CD4-positive, alpha-beta memory T cell (primary cell): ENCODE measurements at regions of chr3 and their contacts with region 1.

Region 1: DNA sequence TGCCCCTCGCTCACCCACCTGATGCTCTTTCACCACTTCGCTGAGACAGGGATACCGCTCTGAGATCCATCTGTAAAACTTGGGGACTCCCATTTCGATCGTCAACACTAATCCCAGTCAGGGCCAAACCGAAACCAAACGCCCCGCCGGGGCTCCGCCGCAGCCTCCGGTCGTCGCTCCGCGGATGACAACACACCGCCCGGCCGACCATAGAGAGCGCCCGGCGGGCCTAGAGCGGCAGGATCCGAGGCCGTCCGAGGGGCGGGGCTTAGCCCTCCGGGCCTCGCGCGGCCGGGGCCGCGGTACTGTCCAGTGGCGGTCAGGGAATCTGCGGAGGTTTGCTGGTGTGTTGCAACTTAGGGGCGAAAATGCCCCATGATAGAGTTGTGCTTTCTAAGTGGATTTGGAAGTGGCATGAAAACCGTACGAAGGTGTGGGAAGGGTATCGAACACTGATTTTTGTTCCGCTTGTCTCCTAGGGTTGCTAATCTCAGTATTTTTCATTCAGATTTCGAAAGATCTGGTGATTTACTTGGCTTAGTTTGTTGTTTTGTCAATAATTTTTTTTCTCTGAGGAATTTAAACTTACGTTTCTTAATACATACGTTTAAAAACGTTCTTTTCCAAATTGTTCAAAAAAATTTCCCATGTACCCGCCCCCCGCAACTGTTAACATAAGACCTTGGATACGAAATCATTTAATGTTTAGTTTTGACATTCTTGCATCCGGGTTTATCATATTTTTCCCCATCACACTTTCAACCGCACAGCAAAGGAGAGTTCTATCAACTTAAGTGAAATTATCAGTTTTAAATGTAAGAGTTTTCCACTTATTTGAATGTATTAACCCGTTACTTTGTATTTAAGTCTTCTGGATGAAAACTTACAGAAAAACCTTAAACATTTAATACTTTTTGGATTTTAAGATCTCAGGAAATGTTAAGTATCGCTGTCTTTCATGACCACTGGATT is at the start of gene XRN1:
- DNase-seq: peak; percentile 94 to 98 (median 95)
- H3K4me3 ChIP-seq: peak within 1 kb of the TSS; percentile 96 to 99
- H3K4me3 Mint-ChIP-seq: peak within 1 kb of the TSS; percentile 98 to 100 (median 99)
- H3K27ac ChIP-seq: peak within 1 kb of the TSS; percentile 100
- H3K27ac Mint-ChIP-seq: peak within 1 kb of the TSS; percentile 99 to 100 (median 100)
- H3K4me1 ChIP-seq: peaks cover 44% of the 10 kb centered on the region
- H3K4me1 Mint-ChIP-seq: peaks cover 27 to 54% (median 41%) of the 10 kb centered on the region in 4 donors
- H3K27me3 ChIP-seq: no peaks in the 10 kb centered on the region
- H3K27me3 Mint-ChIP-seq: no peaks in the 10 kb centered on the region
- total RNA-seq, gene XRN1: 102 to 104 TPM

Region 2: DNA sequence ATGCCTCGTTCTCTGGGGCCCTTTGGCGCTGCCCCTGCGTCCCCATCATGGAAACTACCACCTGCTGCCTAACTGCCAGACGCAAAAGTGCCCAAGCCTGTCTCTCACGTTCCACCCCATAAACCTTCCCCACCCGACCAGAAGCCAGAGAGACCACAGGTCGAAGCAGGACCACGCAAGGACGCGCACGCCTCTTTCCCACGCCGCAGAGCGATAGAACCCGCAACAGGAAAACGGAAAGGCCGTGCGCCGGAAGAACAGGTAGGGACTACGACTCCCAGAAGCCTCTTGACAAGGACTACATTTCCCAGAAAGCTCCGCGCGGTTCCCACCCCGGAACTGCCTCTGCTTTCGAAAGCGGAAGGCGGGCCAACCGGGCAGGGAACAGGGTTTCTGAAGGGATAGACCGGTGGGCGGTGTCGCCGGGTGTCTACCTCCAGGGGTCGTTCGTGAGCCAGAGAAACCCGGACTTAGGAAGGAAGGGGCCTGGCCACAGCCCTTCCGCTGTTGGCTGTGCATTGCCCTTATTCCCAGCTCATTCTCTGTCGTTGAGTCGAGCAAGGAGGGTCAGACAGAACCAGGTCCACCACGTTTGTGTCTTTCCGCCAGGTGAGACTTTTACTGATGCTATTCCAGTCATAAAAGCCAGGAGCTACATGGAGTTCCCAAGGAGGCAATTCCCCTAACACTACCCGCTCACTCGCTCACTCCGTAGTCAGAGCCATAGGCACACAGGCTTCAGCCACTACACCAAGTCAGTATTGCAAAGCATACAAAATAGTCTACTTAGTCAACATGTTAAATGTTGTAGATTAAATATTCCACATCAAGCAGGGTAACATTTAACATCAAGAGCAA is 1136.4 kb before region 1 on chr3:
- CTCF ChIA-PET with region 1: no interaction called
- POLR2A ChIA-PET with region 1: no interaction called
- intact Hi-C with region 1: loop called (anchors 5 kb)
- DNase-seq: peak; percentile 97 to 99 (median 98)
- H3K4me3 ChIP-seq: peak overlapping the region; percentile 68 to 73
- H3K4me3 Mint-ChIP-seq: peak overlapping the region; percentile 92 to 100 (median 98)
- H3K27ac ChIP-seq: peak overlapping the region; percentile 66
- H3K27ac Mint-ChIP-seq: peak overlapping the region; percentile 89 to 99 (median 97)
- H3K4me1 ChIP-seq: peaks cover 46% of the 10 kb centered on the region
- H3K4me1 Mint-ChIP-seq: peaks cover 32 to 60% (median 49%) of the 10 kb centered on the region in 4 donors
- H3K27me3 ChIP-seq: no peaks in the 10 kb centered on the region
- H3K27me3 Mint-ChIP-seq: no peaks in the 10 kb centered on the region

Region 3: DNA sequence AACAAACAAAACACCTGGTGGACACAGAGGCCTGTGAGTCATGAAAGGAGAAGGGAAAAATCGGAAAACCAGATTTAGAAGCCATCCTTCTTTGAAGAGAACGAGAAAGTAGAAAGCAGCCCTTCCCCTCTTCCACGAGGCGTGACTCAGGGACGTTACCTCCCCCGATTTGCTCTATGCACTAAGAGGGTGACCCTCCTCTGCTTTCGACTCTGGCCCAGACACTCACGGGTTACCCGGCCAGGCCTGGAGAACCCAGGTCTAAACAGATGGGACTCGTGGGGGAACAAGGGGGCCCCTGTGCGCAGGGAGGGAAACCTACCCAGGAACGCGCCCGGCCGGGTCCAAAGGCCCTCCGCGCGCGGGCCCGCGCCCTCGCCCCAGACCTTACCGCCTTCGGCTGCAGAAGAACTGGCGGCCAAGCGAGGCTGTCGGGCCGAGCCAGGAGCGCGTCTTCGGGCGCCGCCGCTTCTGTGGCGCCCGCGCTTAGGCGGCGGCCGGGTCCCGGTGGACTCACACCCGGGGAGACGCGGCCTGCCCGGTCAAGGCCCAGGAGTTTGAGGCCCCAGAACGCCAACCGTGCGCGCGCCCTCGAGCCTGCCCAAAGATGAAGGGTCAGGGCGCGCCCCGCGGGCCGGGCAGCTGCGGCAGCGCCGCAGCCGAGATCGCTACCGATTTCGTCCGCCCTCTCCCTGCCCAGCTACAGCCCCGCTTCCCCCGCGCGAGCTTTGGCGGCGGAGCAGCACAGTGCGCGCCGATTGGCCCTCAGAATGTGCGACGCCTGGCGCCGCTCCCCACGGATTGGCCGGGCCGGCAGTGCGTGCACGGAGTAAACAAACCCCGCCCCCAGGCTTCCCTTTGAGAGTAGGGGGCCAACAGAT is 299.1 kb before region 1 on chr3 and contains the start of gene TFDP2:
- CTCF ChIA-PET with region 1: no interaction called
- POLR2A ChIA-PET with region 1: no interaction called
- intact Hi-C with region 1: loop called (anchors 5 kb)
- DNase-seq: peak; percentile 81 to 84 (median 84)
- H3K4me3 ChIP-seq: peak within 1 kb of the TSS; percentile 4 to 67
- H3K4me3 Mint-ChIP-seq: peak within 1 kb of the TSS; percentile 88 to 96 (median 90)
- H3K27ac ChIP-seq: peak within 1 kb of the TSS; percentile 66
- H3K27ac Mint-ChIP-seq: peak within 1 kb of the TSS; percentile 58 to 95 (median 92)
- H3K4me1 ChIP-seq: peaks cover 20% of the 10 kb centered on the region
- H3K4me1 Mint-ChIP-seq: peaks cover 23 to 35% (median 27%) of the 10 kb centered on the region in 4 donors
- H3K27me3 ChIP-seq: no peaks in the 10 kb centered on the region
- H3K27me3 Mint-ChIP-seq: no peaks in the 10 kb centered on the region
- total RNA-seq, gene TFDP2: 29.0 to 31.5 TPM

Region 4: DNA sequence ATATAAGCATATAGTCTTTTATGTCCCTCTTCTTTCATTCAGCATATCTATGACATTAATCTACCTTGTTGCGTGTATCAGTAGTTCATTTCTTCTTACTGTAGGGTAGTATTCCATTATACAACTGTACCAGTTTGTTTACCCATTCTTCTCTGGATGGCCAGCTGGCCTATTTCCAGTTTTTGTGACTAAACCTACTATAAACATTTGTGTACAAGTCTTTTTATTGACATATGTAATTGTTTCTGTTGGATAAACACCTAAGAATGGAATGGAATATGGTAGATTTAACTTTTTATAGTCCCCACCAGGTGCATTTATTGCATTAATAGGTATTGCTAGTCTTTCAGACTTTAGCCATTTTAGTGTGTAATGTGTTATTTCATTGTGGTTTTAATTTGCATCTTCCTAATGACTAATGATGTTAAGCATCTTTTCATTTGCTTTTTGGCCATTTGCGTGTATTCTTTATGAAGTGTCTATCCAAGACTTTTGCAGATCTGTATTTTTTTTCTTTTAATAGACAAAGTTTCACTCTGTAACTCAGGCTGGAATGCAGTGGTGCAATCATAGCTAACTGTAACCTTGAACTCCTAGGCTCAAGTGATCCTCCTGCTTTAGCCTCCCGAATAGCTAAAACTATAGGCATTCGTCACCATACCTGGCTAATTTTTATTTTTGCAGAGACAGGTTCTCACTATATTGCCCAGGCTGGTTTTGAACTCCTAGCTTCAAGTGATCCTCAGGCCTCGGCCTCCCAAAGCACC is 41.6 kb after region 1 on chr3:
- CTCF ChIA-PET with region 1: no interaction called
- POLR2A ChIA-PET with region 1: no interaction called
- intact Hi-C with region 1: no loop called
- DNase-seq: no peak
- H3K4me3 ChIP-seq: no peak overlapping the region
- H3K4me3 Mint-ChIP-seq: no peak overlapping the region
- H3K27ac ChIP-seq: no peak overlapping the region
- H3K27ac Mint-ChIP-seq: no peak overlapping the region
- H3K4me1 ChIP-seq: no peaks in the 10 kb centered on the region
- H3K4me1 Mint-ChIP-seq: no peaks in the 10 kb centered on the region
- H3K27me3 ChIP-seq: no peaks in the 10 kb centered on the region
- H3K27me3 Mint-ChIP-seq: no peaks in the 10 kb centered on the region

Region 5: GRCh38 chr3:142509079-142509478 is 60.9 kb after region 1 on chr3:
- CTCF ChIA-PET with region 1: no interaction called
- POLR2A ChIA-PET with region 1: interaction called, 3 read pairs
- intact Hi-C with region 1: loop called (anchors 2 kb)
- DNase-seq: no peak
- H3K4me3 ChIP-seq: peak overlapping the region in 1 of 2 donors; percentile 54
- H3K4me3 Mint-ChIP-seq: peak overlapping the region; percentile 87 to 93 (median 90)
- H3K27ac ChIP-seq: no peak overlapping the region
- H3K27ac Mint-ChIP-seq: peak overlapping the region; percentile 88 to 98 (median 94)
- H3K4me1 ChIP-seq: peaks cover 7% of the 10 kb centered on the region
- H3K4me1 Mint-ChIP-seq: peaks cover 0 to 21% (median 12%) of the 10 kb centered on the region in 4 donors
- H3K27me3 ChIP-seq: no peaks in the 10 kb centered on the region
- H3K27me3 Mint-ChIP-seq: no peaks in the 10 kb centered on the region

Region 6: GRCh38 chr3:142723968-142724681 is 276.0 kb after region 1 on chr3 and contains the start of gene TRPC1:
- CTCF ChIA-PET with region 1: no interaction called
- POLR2A ChIA-PET with region 1: no interaction called
- intact Hi-C with region 1: loop called (anchors 2 kb)
- DNase-seq: peak; percentile 80 to 87 (median 84)
- H3K4me3 ChIP-seq: peak within 1 kb of the TSS; percentile 58 to 65
- H3K4me3 Mint-ChIP-seq: peak within 1 kb of the TSS; percentile 88 to 91 (median 90)
- H3K27ac ChIP-seq: peak within 1 kb of the TSS; percentile 55
- H3K27ac Mint-ChIP-seq: peak within 1 kb of the TSS; percentile 74 to 96 (median 95)
- H3K4me1 ChIP-seq: peaks cover 12% of the 10 kb centered on the region
- H3K4me1 Mint-ChIP-seq: peaks cover 8 to 15% (median 15%) of the 10 kb centered on the region in 4 donors
- H3K27me3 ChIP-seq: no peaks in the 10 kb centered on the region
- H3K27me3 Mint-ChIP-seq: peaks cover 8 to 15% of the 10 kb centered on the region in 2 donors
- total RNA-seq, gene TRPC1: 6.0 to 8.8 TPM